Ovary (tissue), 10 donors: ENCODE measurements at regions of chr2 and their contacts with region 1.

Region 1: DNA sequence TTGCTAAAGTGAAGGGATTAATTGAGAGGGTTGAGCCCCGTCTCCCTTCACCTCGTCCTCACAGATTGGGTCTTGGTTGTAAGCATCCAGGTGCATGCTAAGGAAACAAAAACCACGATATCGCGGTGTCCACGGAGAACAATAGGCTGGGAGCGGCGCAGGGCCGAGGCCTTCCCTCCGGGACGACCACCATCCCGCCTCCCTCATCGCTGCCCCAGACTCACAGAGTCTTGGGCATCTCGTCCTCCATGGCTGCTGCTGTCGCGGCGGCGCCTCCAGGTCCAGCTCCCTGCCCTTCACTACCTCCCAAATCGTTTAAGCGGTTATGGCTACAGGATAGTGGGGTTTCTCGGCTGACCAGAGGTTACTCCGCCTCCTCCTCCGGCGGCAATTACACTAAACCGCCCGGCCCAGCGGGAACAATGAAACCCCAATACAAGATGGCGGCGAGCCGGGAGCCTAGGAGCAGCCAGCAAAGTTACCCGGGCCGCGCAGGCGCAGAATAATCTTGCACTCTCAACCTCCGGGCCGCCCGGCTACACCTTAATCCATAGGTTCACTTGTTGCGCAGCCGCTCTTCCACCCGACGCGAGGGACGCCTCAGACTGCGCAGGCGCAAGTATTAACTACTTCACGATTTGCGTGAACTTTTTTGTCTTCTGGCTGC is at the start of gene TIA1:
- DNase-seq: peak; percentile 97 to 99 (median 98)
- H3K4me3 ChIP-seq: peak within 1 kb of the TSS; percentile 90
- H3K27ac ChIP-seq: peak within 1 kb of the TSS; percentile 96 to 97
- H3K4me1 ChIP-seq: peaks cover 12% of the 10 kb centered on the region
- H3K27me3 ChIP-seq: no peaks in the 10 kb centered on the region
- CTCF ChIP-seq: no peak
- EP300 ChIP-seq: no peak
- POLR2A ChIP-seq: peak; percentile 65
- total RNA-seq, gene TIA1: 99.6 to 143 (median 134) TPM

Region 2: GRCh38 chr2:70142590-70143313 is 105.6 kb before region 1 on chr2:
- intact Hi-C with region 1: loop called in 1 of 4 experiments (anchors 5 kb)
- DNase-seq: peak; percentile 99 to 100 (median 100)
- H3K4me3 ChIP-seq: peak overlapping the region; percentile 73
- H3K27ac ChIP-seq: peak overlapping the region; percentile 100
- H3K4me1 ChIP-seq: peaks cover 13% of the 10 kb centered on the region
- H3K27me3 ChIP-seq: no peaks in the 10 kb centered on the region
- CTCF ChIP-seq: peak; percentile 87 to 100 (median 100)
- EP300 ChIP-seq: peak; percentile 96
- POLR2A ChIP-seq: peak; percentile 93

Region 3: GRCh38 chr2:70190418-70191243 is 57.7 kb before region 1 on chr2 and contains the start of gene C2orf42:
- intact Hi-C with region 1: loop called in 1 of 4 experiments (anchors 5 kb)
- DNase-seq: peak; percentile 95 to 97 (median 96)
- H3K4me3 ChIP-seq: peak within 1 kb of the TSS; percentile 88
- H3K27ac ChIP-seq: peak within 1 kb of the TSS; percentile 96
- H3K4me1 ChIP-seq: no peaks in the 10 kb centered on the region
- H3K27me3 ChIP-seq: no peaks in the 10 kb centered on the region
- CTCF ChIP-seq: peak in 2 of 3 donors; percentile 13 to 38
- EP300 ChIP-seq: peak; percentile 79
- POLR2A ChIP-seq: peak; percentile 98
- total RNA-seq, gene C2orf42: 13.9 to 26.1 (median 22.3) TPM

Region 4: DNA sequence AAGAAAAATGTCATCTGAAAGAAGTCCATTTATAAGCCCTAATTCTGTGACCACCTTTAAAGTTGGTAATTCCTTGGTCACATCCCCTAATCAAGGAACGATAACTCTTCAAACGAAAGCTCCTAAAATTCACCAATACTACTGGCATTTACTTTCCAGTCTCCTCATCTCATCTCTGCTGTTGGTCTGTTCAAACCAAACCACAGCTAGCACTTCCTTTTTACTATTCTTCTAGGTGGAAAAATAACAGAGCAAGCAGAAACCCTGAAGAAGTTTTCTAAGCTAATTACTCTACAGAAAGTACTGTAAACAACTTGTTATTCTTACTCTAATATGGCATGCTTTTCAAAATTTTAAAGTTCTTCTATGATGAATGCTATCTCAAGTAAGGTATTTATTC is 21.5 kb before region 1 on chr2:
- intact Hi-C with region 1: no loop called
- DNase-seq: no peak
- H3K4me3 ChIP-seq: no peak overlapping the region
- H3K27ac ChIP-seq: no peak overlapping the region
- H3K4me1 ChIP-seq: no peaks in the 10 kb centered on the region
- H3K27me3 ChIP-seq: no peaks in the 10 kb centered on the region
- CTCF ChIP-seq: no peak
- EP300 ChIP-seq: no peak
- POLR2A ChIP-seq: no peak

Region 5: DNA sequence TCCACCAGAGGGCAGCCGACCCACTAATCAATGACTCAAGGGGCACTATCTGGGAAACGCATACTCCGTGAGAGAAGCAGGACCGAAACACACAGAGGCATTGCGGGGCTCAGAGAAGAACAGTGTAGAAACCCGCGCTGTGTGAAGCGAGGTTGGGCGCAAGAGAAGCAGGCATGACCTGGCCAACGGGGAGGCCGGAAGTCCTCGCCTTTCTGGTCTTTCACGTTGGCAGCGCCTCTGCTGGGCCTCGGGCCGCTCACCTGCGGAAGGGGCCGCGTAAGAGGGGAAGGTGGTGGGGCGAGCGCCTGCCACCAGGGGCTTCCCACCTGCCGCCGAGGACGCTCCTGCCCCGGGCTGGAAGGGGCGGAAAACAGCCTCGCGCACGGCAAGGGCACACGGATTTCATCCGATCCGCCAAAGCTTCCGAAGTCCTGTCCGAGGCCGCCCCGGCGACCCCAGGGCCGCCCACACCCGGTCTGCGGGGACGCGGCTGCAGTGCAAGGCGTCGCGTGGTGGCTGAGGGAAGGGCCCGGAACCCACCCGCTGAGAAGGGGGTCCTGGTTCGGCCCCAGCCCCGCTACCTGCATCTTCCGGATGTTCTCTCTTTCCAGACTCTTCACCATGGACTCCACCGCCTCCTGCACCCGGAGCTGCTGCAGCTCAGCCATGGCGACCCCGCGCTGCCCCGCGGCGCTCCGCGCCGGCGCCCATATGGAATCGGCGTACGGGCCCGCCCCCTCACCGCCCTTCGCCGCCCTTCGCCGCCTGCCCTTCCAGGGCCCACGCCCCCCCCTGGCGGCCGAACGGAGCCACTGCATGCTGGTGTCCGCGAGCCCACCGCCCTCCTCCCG is 53.3 kb after region 1 on chr2 and contains the start of gene FAM136A:
- intact Hi-C with region 1: no loop called
- DNase-seq: peak; percentile 81 to 92 (median 88)
- H3K4me3 ChIP-seq: peak within 1 kb of the TSS; percentile 82
- H3K27ac ChIP-seq: peak within 1 kb of the TSS; percentile 52 to 75
- H3K4me1 ChIP-seq: peaks cover 2% of the 10 kb centered on the region
- H3K27me3 ChIP-seq: no peaks in the 10 kb centered on the region
- CTCF ChIP-seq: peak; percentile 89 to 95 (median 94)
- EP300 ChIP-seq: no peak
- POLR2A ChIP-seq: no peak
- total RNA-seq, gene FAM136A: 10.4 to 23.1 (median 17.2) TPM

Region 6: DNA sequence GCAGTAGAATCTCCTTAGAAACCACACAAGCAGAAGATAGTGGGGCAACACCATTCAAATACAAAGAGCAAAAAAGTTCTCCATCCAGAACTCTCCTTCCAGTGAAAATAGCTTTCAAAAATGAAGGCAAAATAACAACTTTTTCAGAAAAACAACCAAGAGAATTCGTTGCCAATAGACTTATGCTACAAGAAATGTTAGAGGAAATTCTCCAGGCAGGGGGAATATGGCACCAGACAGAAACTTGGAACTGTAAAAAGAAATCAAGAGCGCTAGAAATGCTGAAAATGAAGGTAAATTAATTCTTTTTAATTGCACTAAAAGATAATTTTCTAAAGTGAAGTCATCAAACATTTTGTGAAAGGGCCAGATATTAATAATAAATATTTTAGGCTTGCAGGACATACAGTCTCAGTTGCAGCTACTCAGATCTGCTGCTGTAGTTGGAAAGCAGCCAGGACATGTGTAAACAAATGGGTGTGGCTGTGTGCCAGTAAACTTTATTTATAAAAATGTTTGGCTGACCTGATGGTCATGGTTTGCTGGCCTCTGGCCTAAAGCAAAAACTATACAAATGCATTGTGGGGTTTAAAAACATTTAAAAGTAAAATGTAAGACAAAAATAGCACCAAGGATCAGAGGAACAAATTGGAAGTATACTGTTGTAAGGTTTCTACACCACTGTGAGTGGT is 379.0 kb after region 1 on chr2:
- intact Hi-C with region 1: no loop called
- DNase-seq: no peak
- H3K4me3 ChIP-seq: no peak overlapping the region
- H3K27ac ChIP-seq: peak overlapping the region in 1 of 2 donors; percentile 10
- H3K4me1 ChIP-seq: peaks cover 3% of the 10 kb centered on the region
- H3K27me3 ChIP-seq: no peaks in the 10 kb centered on the region
- CTCF ChIP-seq: no peak
- EP300 ChIP-seq: no peak
- POLR2A ChIP-seq: no peak